OCI-LY7 (cell line): ENCODE measurements at regions of chr18 and their contacts with region 1.

Region 1: DNA sequence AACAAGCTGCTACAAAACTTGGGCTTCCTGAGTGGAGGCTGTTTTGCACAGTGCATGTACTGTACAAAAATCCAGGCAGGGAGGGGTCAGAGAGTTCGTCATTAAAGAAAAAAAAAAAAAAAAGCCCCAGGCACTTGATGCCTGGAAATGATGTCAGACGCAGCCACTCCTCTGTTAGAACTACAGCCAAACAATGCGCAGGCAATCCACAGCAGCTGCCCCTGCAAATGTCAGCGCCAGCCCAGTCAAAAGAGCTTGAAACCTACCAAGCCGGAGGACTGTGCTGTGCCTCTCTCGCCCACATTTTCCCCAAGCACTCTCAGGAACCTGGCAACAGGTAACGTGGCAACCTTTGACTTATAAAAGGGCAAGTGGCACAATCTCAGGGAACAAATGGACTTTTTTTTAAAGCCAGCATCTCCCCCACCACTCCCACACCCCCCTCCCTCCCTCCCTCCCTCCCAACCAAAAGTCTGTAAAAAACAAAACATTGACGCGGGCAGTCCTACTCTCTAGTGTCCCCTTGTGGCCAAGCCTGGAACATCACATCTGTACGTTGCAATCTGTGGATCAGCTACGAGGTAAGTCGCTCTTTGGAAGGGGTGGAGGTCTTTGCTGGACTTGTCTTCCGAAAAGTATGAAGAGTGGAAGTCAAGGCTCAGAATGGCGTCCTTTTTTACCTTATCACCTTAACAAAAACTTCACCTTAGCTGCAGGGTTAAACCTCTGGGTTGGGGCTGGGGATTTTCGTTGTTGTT is 144.1 kb downstream of the TGIF1 start:
- DNase-seq: peak; percentile 97
- H3K4me3 ChIP-seq: peak overlapping the region; percentile 79
- H3K27ac ChIP-seq: peak overlapping the region; percentile 95
- H3K4me1 ChIP-seq: peaks cover 80% of the 10 kb centered on the region
- CTCF ChIP-seq: peak; percentile 79

Region 2: GRCh38 chr18:3297025-3297984 is 296.8 kb before region 1 on chr18:
- CTCF ChIA-PET with region 1: no interaction called
- POLR2A ChIA-PET with region 1: interaction called, 11 read pairs
- intact Hi-C with region 1: no loop called
- DNase-seq: peak; percentile 97
- H3K4me3 ChIP-seq: peak overlapping the region; percentile 85
- H3K27ac ChIP-seq: peak overlapping the region; percentile 57
- H3K4me1 ChIP-seq: peaks cover 10% of the 10 kb centered on the region
- CTCF ChIP-seq: peak; percentile 98

Region 3: GRCh38 chr18:3402982-3403451 is 191.1 kb before region 1 on chr18:
- CTCF ChIA-PET with region 1: no interaction called
- POLR2A ChIA-PET with region 1: interaction called, 11 read pairs
- intact Hi-C with region 1: no loop called
- DNase-seq: peak; percentile 68
- H3K4me3 ChIP-seq: peak overlapping the region; percentile 19
- H3K27ac ChIP-seq: peak overlapping the region; percentile 84
- H3K4me1 ChIP-seq: peaks cover 44% of the 10 kb centered on the region
- CTCF ChIP-seq: no peak

Region 4: DNA sequence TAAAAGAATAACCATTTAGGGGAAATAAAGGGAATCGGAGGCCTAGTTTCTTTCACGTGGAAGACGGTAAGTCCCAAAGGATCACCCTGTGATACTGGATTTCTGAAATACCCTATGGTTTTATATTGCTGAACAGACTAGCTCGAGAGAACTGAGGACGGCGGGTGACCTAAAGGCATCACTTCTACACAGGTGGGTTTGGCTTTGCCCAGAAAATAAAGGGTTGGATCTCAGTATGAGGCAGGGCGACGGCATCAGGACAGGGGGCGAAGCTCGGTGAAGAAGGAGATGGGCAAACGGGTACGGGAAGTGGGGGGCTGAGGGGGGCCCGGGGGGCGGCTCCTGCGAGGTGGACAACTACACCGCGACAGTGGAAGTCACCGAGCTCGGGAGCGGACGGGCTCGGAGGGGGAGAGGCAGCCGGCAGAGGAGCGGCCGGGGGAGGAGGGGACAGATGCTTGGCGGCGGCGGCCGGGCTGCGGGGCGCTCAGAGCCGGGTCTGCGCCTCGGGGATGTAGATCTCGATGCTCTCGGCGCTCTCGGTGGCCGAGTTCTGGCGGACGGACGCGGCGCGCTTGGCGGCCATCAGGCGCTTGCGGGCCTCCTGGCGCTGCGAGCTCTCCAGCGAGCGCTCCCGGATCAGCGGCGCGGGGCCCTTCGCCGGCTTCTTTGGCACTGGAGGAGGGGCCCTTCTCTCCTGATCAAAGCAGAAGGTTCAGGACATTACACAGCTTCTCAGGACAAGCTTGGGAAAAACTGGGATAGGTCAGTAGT is 95.2 kb before region 1 on chr18:
- CTCF ChIA-PET with region 1: no interaction called
- POLR2A ChIA-PET with region 1: interaction called, 5 read pairs
- intact Hi-C with region 1: loop called (anchors 2 kb)
- DNase-seq: peak; percentile 70
- H3K4me3 ChIP-seq: peak overlapping the region; percentile 74
- H3K27ac ChIP-seq: peak overlapping the region; percentile 89
- H3K4me1 ChIP-seq: peaks cover 50% of the 10 kb centered on the region
- CTCF ChIP-seq: no peak

Region 5: DNA sequence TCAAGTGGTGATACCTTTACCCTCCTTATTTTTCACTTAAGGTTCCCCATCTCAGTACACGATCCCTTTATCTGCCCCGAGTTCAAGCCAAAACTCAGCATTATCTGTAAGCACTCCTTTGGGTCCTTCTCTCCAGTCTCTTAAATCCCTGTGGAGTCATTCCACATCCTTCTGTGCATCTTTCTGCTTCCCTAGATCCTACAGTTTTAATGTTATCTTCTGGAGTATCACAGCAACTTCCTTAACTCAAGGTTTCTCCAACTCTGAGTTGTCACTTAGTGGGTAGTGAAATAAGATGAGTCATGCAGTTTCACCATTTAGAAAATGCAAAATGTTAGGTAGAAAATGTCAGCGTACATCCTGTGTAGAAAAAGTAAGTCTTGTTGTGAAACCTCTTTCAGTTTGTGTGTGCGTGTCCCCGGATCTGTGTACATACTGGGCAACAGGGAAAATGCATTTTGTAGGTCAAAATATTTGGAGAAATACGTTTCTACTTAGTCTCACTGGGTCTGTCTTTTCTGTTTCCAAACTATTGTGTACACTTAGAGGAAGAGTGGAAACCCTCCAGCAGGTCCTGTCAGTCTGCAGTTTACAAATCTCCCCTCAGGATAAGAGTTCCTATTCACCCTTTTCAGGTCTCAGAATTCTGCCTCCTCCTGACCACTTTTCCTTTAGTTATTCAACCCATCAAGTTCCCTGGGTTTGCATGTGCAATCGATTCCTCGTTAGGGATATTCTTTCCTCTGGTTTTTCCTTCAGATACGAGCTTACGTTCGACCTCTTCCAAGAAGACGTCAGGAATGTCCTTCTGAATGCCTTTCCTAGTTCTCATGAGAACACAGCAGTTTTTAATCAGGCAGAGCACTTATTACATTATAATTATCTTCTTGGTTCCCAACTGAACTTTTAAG is 10.7 kb after region 1 on chr18:
- CTCF ChIA-PET with region 1: interaction called, 6 read pairs
- POLR2A ChIA-PET with region 1: interaction called, 25 read pairs
- intact Hi-C with region 1: no loop called
- DNase-seq: peak; percentile 75
- H3K4me3 ChIP-seq: peak overlapping the region; percentile 60
- H3K27ac ChIP-seq: peak overlapping the region; percentile 77
- H3K4me1 ChIP-seq: peaks cover 46% of the 10 kb centered on the region
- CTCF ChIP-seq: no peak

Region 6: DNA sequence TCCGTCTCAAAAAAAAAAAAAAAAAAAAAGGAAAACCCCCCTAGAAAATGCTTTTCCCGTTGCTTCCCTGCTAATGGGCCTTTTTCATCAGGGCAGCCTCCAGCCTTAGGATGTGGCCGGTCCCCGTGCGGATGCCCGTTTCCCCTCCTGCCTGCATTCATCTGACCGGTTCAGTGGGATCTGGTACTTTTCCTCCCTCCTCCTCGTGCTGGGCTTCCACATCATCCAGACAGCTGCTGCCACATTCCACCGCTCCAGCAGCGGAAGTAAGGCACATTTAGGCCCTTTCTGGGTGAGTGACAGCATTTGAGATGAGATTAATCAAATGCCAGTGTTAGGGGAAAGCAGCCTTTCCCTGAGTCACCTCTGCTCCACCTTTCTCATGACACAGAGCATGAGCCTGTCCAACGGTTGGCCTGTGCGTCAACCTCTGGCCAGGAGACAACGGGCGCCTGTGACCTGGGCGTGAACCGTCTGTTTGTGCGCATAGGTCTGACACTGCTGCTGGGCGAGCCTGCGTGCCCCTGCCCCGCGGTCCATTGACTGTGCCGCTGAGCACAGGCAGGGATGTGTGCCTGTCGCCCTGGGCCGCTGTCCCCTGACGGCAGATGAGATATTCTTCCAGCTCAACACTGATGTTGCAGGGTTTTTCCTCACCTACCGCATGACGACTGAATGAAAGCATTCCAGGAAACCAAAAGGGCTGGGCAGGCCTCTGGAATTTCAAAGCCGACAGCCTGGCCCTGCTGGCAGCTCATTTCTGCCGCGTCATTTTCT is 29.9 kb after region 1 on chr18:
- CTCF ChIA-PET with region 1: no interaction called
- POLR2A ChIA-PET with region 1: no interaction called
- intact Hi-C with region 1: no loop called
- DNase-seq: no peak
- H3K4me3 ChIP-seq: no peak overlapping the region
- H3K27ac ChIP-seq: no peak overlapping the region
- H3K4me1 ChIP-seq: peaks cover 27% of the 10 kb centered on the region
- CTCF ChIP-seq: no peak

Region 7: GRCh38 chr18:3660739-3661515 is 66.8 kb after region 1 on chr18:
- CTCF ChIA-PET with region 1: interaction called, 10 read pairs
- POLR2A ChIA-PET with region 1: interaction called, 28 read pairs
- intact Hi-C with region 1: loop called (anchors 1 kb)
- DNase-seq: peak; percentile 73
- H3K4me3 ChIP-seq: peak overlapping the region; percentile 53
- H3K27ac ChIP-seq: peak overlapping the region; percentile 97
- H3K4me1 ChIP-seq: peaks cover 68% of the 10 kb centered on the region
- CTCF ChIP-seq: no peak